Panc1 (cell line): ENCODE measurements at regions of chr15 and their contacts with region 1.

Region 1: DNA sequence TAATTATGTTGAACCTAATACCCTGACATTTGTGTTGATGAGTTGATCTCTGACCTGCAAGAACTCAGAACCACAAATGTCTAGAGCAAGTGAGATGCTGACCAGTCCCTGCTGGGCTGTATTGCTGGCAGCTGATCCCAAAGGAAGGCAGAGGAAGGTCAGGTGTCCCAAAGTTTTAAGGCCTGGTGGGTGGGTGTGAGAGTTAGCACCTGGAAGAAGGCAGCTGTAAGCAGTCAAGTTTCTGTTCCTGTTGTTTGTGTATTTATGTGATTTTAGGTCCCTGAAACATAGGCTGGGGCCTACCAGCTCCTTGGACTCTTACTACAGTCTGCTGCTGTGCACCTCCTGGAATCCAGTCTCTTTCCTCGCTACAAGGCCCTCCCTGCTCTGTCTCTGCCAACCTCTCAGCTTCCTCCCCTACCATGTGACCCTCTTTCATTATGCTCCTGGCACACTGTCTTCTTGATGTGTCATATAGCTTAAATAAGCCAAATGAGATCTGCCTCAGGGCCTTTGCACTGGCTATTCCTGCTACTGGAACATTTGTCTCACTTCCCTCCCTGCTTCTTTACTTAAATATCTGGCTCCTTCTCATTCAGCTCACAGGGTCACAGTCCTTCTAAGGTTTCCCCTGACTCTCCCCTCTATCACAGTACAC is 31.0 kb upstream of the ATOSA start:
- DNase-seq: no peak
- ATAC-seq: no peak
- H3K4me3 ChIP-seq: no peak overlapping the region
- H3K27ac ChIP-seq: no peak overlapping the region
- H3K4me1 ChIP-seq: no peaks in the 10 kb centered on the region
- H3K27me3 ChIP-seq: no peaks in the 10 kb centered on the region
- CTCF ChIP-seq: no peak

Region 2: GRCh38 chr15:52112203-52112750 is 597.9 kb before region 1 on chr15:
- CTCF ChIA-PET with region 1: no interaction called
- POLR2A ChIA-PET with region 1: no interaction called
- in situ Hi-C with region 1: no loop called
- intact Hi-C with region 1: no loop called
- DNase-seq: no peak
- ATAC-seq: peak; percentile 80
- H3K4me3 ChIP-seq: peak overlapping the region; percentile 4 to 15; a peak in 2 of 4 replicates
- H3K27ac ChIP-seq: no peak overlapping the region
- H3K4me1 ChIP-seq: no peaks in the 10 kb centered on the region
- H3K27me3 ChIP-seq: no peaks in the 10 kb centered on the region
- CTCF ChIP-seq: no peak

Region 3: DNA sequence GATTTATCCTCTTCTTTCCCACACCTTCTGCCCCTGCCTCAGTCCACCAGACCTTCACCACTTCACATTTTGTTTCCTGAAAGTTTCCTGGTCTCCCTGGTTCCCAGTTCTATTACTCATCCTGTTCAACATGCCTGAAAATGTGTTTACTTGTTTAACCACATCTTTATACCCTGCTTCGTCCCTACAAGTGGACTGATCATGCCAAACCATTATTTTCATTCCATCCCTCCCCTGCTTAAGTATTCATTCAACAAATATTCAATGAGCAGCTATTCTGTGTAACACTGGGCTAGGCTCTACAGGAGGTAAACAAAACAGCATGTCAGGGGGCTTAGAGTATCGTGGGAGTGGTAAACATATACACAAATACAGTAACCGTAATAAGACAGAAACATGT is 187.0 kb before region 1 on chr15:
- CTCF ChIA-PET with region 1: no interaction called
- POLR2A ChIA-PET with region 1: interaction called, 18 read pairs
- in situ Hi-C with region 1: no loop called
- intact Hi-C with region 1: no loop called
- DNase-seq: no peak
- ATAC-seq: no peak
- H3K4me3 ChIP-seq: no peak overlapping the region
- H3K27ac ChIP-seq: no peak overlapping the region
- H3K4me1 ChIP-seq: peaks cover 11% of the 10 kb centered on the region
- H3K27me3 ChIP-seq: no peaks in the 10 kb centered on the region
- CTCF ChIP-seq: no peak